Activated CD4-positive, alpha-beta T cell treated with anti-CD3 and anti-CD28 coated beads for 36 hours (primary cell): ENCODE measurements at regions of chr1 and their contacts with region 1.

Region 1: GRCh38 chr1:213905344-213905743 is 82.4 kb upstream of the PROX1 start:
- DNase-seq: no peak
- ATAC-seq: no peak
- H3K4me3 Mint-ChIP-seq: no peak overlapping the region
- H3K27ac Mint-ChIP-seq: no peak overlapping the region
- H3K4me1 Mint-ChIP-seq: no peaks in the 10 kb centered on the region
- H3K27me3 Mint-ChIP-seq: no peaks in the 10 kb centered on the region

Region 2: GRCh38 chr1:213953806-213954205 is 48.5 kb after region 1 on chr1:
- CTCF ChIA-PET with region 1: no interaction called
- POLR2A ChIA-PET with region 1: no interaction called
- intact Hi-C with region 1: loop called in 1 of 2 experiments (anchors 5 kb)
- DNase-seq: no peak
- ATAC-seq: no peak
- H3K4me3 Mint-ChIP-seq: no peak overlapping the region
- H3K27ac Mint-ChIP-seq: no peak overlapping the region
- H3K4me1 Mint-ChIP-seq: no peaks in the 10 kb centered on the region
- H3K27me3 Mint-ChIP-seq: peaks cover 6% of the 10 kb centered on the region